ENCODE measurements at regions of chr3 and their contacts with region 1.

Region 1: GRCh38 chr3:64224826-64225610 is at the start of gene PRICKLE2:
- DNase-seq: peak; percentile 96
- ATAC-seq: peak; percentile 73
- H3K4me3 ChIP-seq: peak within 1 kb of the TSS; percentile 38
- H3K27ac ChIP-seq: peak within 1 kb of the TSS; percentile 89
- H3K4me1 ChIP-seq: peaks cover 32% of the 10 kb centered on the region
- H3K27me3 ChIP-seq: no peaks in the 10 kb centered on the region
- CTCF ChIP-seq: peak; percentile 49
- POLR2A ChIP-seq: peak; percentile 67
- RAD21 ChIP-seq: peak; percentile 70
- total RNA-seq, gene PRICKLE2: 14.2 and 16.7 TPM in 2 replicates

Region 2: GRCh38 chr3:63557912-63558311 is 667.1 kb before region 1 on chr3:
- CTCF ChIA-PET with region 1: no interaction called
- POLR2A ChIA-PET with region 1: no interaction called
- dilution Hi-C with region 1: no loop called
- in situ Hi-C with region 1: no loop called
- intact Hi-C with region 1: no loop called
- DNase-seq: no peak
- ATAC-seq: no peak
- H3K4me3 ChIP-seq: no peak overlapping the region
- H3K27ac ChIP-seq: no peak overlapping the region
- H3K4me1 ChIP-seq: no peaks in the 10 kb centered on the region
- H3K27me3 ChIP-seq: no peaks in the 10 kb centered on the region
- CTCF ChIP-seq: no peak
- POLR2A ChIP-seq: no peak
- RAD21 ChIP-seq: no peak

Region 3: DNA sequence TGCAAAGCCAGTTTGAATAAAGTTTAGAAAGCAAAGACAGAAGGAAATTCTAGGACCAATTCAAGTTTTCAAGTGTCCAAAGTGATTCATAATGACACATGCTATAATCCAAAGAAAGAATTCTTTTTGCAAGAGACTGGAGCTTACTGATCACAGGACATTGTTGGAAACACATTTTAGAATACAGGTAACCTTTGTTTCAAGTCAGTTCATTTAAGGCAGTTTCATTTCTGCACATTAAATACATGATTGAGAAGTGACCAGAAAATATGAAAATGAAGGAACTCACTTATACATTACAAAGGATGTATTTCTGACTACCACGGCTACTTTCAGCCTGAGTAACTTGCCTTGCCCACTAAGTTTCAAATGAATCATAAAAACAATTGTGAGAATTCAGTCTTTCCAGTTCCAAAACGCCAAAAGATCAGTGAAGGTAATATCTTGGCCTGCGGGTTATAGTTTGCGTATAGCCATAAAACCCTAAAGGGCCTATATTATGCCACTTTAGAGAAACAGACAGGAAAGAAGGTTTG is 48.5 kb before region 1 on chr3:
- CTCF ChIA-PET with region 1: no interaction called
- POLR2A ChIA-PET with region 1: no interaction called
- dilution Hi-C with region 1: no loop called
- in situ Hi-C with region 1: no loop called
- intact Hi-C with region 1: loop called (anchors 5 kb)
- DNase-seq: peak; percentile 54
- ATAC-seq: peak; percentile 6; the same call in 1 of the 2 replicates
- H3K4me3 ChIP-seq: no peak overlapping the region
- H3K27ac ChIP-seq: no peak overlapping the region
- H3K4me1 ChIP-seq: peaks cover 13% of the 10 kb centered on the region
- H3K27me3 ChIP-seq: no peaks in the 10 kb centered on the region
- CTCF ChIP-seq: no peak
- POLR2A ChIP-seq: no peak
- RAD21 ChIP-seq: no peak

Region 4: DNA sequence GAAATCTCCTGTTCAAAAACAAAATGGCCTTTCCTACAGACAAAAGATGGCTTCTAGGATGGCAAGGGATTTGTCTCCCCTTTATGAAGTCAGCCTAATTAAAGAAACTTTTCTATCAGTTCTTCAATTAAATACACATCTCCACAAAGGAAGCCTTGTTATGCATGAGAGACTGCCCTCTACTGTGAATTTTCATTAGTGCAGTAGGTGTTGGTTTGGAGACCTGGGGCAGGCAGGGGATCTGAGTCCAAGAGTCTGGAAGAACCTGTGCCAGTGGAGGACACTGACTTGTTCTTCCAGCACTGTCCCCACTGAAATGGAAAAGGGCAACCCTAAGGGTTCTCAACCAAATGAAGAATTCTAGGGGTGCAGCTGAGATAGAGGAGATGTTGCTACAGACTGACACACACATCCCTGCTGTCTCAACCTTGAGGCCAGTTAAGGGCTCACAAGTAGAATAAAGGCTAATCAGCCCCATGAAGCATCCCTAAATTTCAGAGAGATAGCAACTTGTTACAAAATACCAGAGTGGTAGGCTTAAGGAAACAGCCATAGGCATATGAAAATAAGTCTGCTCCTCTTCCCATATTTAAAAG is 174.3 kb after region 1 on chr3:
- CTCF ChIA-PET with region 1: interaction called, 4 read pairs
- POLR2A ChIA-PET with region 1: no interaction called
- dilution Hi-C with region 1: no loop called
- in situ Hi-C with region 1: no loop called
- intact Hi-C with region 1: loop called (anchors 2 kb)
- DNase-seq: peak; percentile 70
- ATAC-seq: peak; percentile 89
- H3K4me3 ChIP-seq: no peak overlapping the region
- H3K27ac ChIP-seq: no peak overlapping the region
- H3K4me1 ChIP-seq: peaks cover 2% of the 10 kb centered on the region
- H3K27me3 ChIP-seq: no peaks in the 10 kb centered on the region
- CTCF ChIP-seq: peak; percentile 85
- POLR2A ChIP-seq: no peak
- RAD21 ChIP-seq: peak; percentile 95

Region 5: GRCh38 chr3:64484289-64484992 is 259.4 kb after region 1 on chr3:
- CTCF ChIA-PET with region 1: interaction called, 3 read pairs
- POLR2A ChIA-PET with region 1: no interaction called
- dilution Hi-C with region 1: no loop called
- in situ Hi-C with region 1: no loop called
- intact Hi-C with region 1: loop called (anchors 5 kb)
- DNase-seq: peak; percentile 80
- ATAC-seq: peak; percentile 100
- H3K4me3 ChIP-seq: no peak overlapping the region
- H3K27ac ChIP-seq: no peak overlapping the region
- H3K4me1 ChIP-seq: no peaks in the 10 kb centered on the region
- H3K27me3 ChIP-seq: no peaks in the 10 kb centered on the region
- CTCF ChIP-seq: peak; percentile 92
- POLR2A ChIP-seq: 0 out of 2 replicates have a peak, but pooled peaks have one; percentile 34
- RAD21 ChIP-seq: peak; percentile 99